A673 (cell line): ENCODE measurements at regions of chr9 and their contacts with region 1.

Region 1: GRCh38 chr9:111926421-111926875 is 29.8 kb downstream of the UGCG start:
- DNase-seq: peak; percentile 99
- H3K4me3 ChIP-seq: no peak overlapping the region
- H3K27ac ChIP-seq: peak overlapping the region; percentile 73
- H3K4me1 ChIP-seq: peaks cover 54% of the 10 kb centered on the region
- H3K27me3 ChIP-seq: no peaks in the 10 kb centered on the region
- CTCF ChIP-seq: no peak

Region 2: GRCh38 chr9:111271481-111272080 is 654.9 kb before region 1 on chr9:
- CTCF ChIA-PET with region 1: no interaction called
- POLR2A ChIA-PET with region 1: no interaction called
- intact Hi-C with region 1: no loop called
- DNase-seq: no peak
- H3K4me3 ChIP-seq: no peak overlapping the region
- H3K27ac ChIP-seq: no peak overlapping the region
- H3K4me1 ChIP-seq: no peaks in the 10 kb centered on the region
- H3K27me3 ChIP-seq: no peaks in the 10 kb centered on the region
- CTCF ChIP-seq: no peak

Region 3: DNA sequence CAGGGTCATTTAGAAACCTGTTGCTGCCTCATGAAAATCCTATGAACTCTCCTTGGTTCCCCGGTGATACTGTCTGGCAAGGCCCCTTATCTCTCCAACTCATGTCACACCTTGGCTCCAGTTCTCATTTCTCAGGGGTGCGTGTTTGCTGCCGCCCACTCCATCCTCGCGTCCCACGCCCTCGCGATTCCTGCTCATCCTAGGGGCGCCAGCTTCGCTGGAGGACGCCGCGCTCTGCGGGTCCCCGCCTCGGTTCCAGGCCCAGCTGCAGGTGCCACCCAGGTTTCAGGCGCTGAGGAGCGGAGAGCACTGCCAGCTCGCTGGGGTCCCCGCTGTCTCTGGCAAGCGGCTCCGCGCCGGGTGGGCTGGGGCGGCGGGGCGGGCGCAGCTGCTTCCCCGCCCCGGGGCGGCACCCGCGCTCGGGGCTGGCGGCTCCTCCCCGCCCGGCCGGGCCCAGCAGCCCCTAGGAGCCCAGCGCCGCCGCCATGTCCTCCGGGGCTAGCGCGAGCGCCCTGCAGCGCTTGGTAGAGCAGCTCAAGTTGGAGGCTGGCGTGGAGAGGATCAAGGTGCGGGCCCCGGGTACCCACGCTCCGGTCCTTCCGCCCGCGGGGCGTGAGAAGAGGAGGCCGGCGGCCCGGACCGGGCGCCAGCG is 265.2 kb before region 1 on chr9 and contains the start of gene GNG10:
- CTCF ChIA-PET with region 1: no interaction called
- POLR2A ChIA-PET with region 1: no interaction called
- intact Hi-C with region 1: no loop called
- DNase-seq: peak; percentile 78
- H3K4me3 ChIP-seq: peak within 1 kb of the TSS; percentile 77
- H3K27ac ChIP-seq: peak within 1 kb of the TSS; percentile 70
- H3K4me1 ChIP-seq: peaks cover 6% of the 10 kb centered on the region
- H3K27me3 ChIP-seq: no peaks in the 10 kb centered on the region
- CTCF ChIP-seq: no peak
- total RNA-seq, gene GNG10: 24.4 and 26.2 TPM in 2 replicates

Region 4: DNA sequence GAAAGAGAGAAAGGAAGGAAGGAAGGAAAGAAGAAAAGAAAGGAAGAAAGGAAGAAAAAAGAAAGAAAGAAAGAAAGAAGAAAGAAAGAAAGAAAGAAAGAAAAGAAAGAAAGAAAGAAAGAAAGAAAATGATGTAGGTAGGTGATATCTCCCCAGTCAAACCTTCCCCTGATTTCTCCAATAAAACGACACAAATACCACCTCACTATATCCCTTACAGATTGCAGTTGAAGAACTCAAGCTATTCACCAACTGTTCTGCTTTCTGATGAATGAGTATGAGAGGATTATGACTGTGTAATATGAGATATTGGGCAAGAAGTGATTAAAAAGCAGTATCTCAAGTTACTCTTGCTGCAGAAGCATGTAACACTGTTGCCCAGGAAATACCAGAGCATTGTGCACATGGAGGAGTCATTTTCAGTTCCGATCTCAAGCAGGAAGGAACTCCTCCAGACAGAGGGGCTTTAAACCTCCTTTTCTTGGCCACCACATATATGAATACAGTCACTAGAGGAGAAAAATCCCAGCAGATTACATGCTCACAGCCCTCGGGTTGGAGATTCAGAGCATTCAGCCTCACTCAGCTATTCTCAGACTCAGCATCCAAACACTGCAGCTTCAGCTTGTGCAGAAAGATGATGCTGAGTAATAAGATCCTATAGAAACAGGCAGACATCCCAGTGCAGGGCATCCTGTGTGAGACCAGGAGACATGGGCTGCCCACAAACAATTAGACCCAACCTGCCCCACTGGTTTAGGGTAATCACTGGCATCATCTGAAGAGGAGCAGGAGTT is 31.6 kb after region 1 on chr9:
- CTCF ChIA-PET with region 1: no interaction called
- POLR2A ChIA-PET with region 1: no interaction called
- intact Hi-C with region 1: loop called (anchors 1 kb)
- DNase-seq: peak; percentile 97
- H3K4me3 ChIP-seq: no peak overlapping the region
- H3K27ac ChIP-seq: peak overlapping the region; percentile 75
- H3K4me1 ChIP-seq: peaks cover 46% of the 10 kb centered on the region
- H3K27me3 ChIP-seq: no peaks in the 10 kb centered on the region
- CTCF ChIP-seq: no peak

Region 5: GRCh38 chr9:111992523-111992922 is 66.1 kb after region 1 on chr9:
- CTCF ChIA-PET with region 1: no interaction called
- POLR2A ChIA-PET with region 1: no interaction called
- intact Hi-C with region 1: no loop called
- DNase-seq: no peak
- H3K4me3 ChIP-seq: no peak overlapping the region
- H3K27ac ChIP-seq: no peak overlapping the region
- H3K4me1 ChIP-seq: no peaks in the 10 kb centered on the region
- H3K27me3 ChIP-seq: no peaks in the 10 kb centered on the region
- CTCF ChIP-seq: no peak

Region 6: GRCh38 chr9:112061152-112061740 is 134.8 kb after region 1 on chr9:
- CTCF ChIA-PET with region 1: no interaction called
- POLR2A ChIA-PET with region 1: no interaction called
- intact Hi-C with region 1: loop called (anchors 2 kb)
- DNase-seq: peak; percentile 92
- H3K4me3 ChIP-seq: no peak overlapping the region
- H3K27ac ChIP-seq: no peak overlapping the region
- H3K4me1 ChIP-seq: peaks cover 35% of the 10 kb centered on the region
- H3K27me3 ChIP-seq: no peaks in the 10 kb centered on the region
- CTCF ChIP-seq: no peak